PC-9 (cell line): ENCODE measurements at regions of chr16 and their contacts with region 1.

Region 1: DNA sequence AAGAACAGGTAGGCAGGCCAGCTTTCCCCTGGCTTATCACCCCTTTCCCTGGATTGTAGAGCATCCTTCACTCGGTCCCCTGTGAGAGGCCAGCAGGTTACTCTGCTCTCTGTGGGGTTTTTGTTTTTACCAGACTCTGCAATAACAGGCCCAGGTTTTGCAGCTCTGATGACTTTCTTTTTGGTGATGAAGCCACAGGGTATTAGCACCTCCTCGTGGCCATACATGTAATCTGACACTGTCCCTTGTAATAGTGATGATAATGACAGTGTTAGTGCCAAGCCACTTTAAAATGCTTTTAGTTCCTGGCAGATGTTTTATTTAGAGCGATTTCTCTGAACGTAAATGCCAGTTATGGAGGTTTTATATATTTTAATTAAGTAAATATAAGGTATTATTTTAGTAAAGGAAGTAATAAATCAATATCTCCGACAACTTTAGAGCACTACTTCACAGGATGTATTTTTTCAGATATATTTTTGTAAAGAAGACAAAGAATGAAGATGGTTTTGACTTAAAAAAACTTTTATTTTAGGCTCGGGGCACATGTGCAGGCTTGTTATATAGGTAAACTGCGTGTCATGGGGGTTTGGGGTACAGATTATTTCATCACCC is 38.0 kb upstream of the CPHXL start:
- DNase-seq: peak; percentile 36 to 41
- H3K4me3 ChIP-seq: no peak overlapping the region
- H3K27ac ChIP-seq: no peak overlapping the region
- H3K4me1 ChIP-seq: no peaks in the 10 kb centered on the region
- H3K27me3 ChIP-seq: no peaks in the 10 kb centered on the region
- CTCF ChIP-seq: peak; percentile 77

Region 2: DNA sequence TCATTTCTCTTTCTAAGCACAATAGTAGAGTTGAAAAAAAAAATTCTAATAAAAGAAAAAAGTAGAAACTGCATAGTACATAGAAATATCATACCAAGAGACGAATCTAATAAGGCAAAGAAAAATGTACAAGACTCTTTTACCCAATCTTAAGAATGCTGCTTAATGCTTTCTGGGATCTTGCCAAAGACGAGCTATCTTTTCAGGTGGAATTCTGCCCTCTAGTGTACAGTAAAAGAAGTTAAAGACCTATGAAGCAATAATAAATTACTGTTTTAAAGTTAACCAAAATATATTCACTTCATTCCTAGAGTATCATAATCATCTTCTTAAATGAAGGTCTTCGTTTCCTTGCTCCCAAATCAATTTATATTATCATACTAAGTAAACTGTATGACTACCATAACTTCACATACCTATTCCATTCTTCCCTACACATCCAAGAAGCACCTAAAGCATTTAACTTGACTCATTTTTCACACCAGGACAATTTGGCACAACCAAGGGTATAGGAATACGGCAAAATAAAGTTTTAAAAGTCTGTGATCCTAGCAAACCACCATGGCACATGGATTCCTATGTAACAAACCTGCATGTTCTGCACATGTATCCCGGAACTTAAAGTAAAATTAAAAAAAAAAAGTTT is 378.6 kb before region 1 on chr16:
- CTCF ChIA-PET with region 1: no interaction called
- POLR2A ChIA-PET with region 1: no interaction called
- intact Hi-C with region 1: loop called (anchors 5 kb)
- DNase-seq: peak in 1 of 2 experiments; percentile 64
- H3K4me3 ChIP-seq: no peak overlapping the region
- H3K27ac ChIP-seq: peak overlapping the region; percentile 20; the same call in 1 of the 2 replicates
- H3K4me1 ChIP-seq: peaks cover 6% of the 10 kb centered on the region
- H3K27me3 ChIP-seq: no peaks in the 10 kb centered on the region
- CTCF ChIP-seq: peak; percentile 87

Region 3: DNA sequence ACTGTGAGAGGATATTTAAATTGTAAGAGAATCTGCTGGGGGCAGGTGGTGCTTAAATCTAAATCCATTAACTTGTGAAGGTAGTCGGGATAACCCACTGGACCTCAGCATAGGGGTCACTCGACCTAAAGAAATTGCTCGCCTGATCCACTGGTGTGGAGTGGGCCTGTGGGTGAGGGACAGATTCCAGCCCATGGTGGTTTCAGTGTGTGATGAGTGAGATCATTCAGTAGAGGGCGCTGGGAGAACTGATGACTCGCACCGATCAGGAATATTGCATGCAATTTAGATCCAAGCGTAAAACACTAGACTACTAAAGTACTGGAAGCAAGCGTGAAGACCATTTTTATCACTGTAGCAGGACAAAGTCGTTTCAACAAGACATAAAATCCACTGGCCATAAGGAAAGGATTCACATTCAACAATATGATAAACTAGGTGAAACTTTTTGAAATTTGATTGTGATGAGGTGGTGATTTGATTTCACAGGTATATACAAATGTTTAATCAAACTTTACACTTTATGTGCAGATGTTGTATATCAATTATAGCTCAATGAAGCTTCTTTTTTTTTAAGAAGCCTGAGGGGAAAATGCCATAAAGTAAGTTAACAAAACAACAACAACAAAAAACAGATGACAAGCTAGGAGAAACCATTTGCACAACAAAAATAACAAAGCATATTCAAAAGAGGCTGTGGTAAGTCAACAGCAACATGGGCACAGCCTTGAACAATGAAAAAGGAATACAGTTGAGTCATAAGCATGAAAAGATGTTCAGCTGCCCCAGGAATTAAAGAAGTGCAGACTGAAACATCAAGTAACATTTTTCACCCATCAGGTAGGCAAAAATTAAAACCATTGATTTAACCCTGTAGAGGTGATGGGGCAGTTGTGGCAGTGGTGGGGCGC is 292.3 kb before region 1 on chr16:
- CTCF ChIA-PET with region 1: no interaction called
- POLR2A ChIA-PET with region 1: interaction called, 4 read pairs
- intact Hi-C with region 1: loop called (anchors 5 kb)
- DNase-seq: peak; percentile 45 to 54
- H3K4me3 ChIP-seq: no peak overlapping the region
- H3K27ac ChIP-seq: no peak overlapping the region
- H3K4me1 ChIP-seq: 0 out of 2 replicates have a peak, but pooled peaks cover 5% of the 10 kb centered on the region
- H3K27me3 ChIP-seq: no peaks in the 10 kb centered on the region
- CTCF ChIP-seq: peak; percentile 81

Region 4: GRCh38 chr16:75653922-75654321 is 110.3 kb before region 1 on chr16:
- CTCF ChIA-PET with region 1: interaction called, 3 read pairs
- POLR2A ChIA-PET with region 1: no interaction called
- intact Hi-C with region 1: loop called (anchors 5 kb)
- DNase-seq: no peak
- H3K4me3 ChIP-seq: no peak overlapping the region
- H3K27ac ChIP-seq: no peak overlapping the region
- H3K4me1 ChIP-seq: peaks cover 17% of the 10 kb centered on the region
- H3K27me3 ChIP-seq: no peaks in the 10 kb centered on the region
- CTCF ChIP-seq: no peak

Region 5: DNA sequence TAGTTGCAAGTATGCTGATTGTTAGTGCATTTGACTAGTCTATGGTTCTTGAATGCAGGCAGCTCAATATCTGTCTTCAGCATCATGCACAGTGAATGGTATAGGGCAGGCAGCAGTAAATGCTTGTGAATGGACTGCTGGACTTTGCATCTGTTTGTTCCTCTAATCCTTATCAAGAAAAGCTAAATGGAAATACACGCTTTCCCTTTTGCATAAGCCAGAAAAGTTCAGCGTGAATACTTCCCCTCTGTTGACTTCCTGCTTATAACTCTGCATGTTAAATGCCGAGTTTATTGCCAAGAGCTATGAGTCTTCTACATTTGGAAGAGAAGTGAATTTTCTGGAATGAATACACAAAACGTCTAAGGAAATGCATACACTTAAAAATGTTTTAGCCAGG is 89.9 kb after region 1 on chr16:
- CTCF ChIA-PET with region 1: no interaction called
- POLR2A ChIA-PET with region 1: no interaction called
- intact Hi-C with region 1: no loop called
- DNase-seq: no peak
- H3K4me3 ChIP-seq: no peak overlapping the region
- H3K27ac ChIP-seq: no peak overlapping the region
- H3K4me1 ChIP-seq: no peaks in the 10 kb centered on the region
- H3K27me3 ChIP-seq: peaks cover 10% of the 10 kb centered on the region; the same call in 1 of the 2 replicates
- CTCF ChIP-seq: no peak